Caco-2 (cell line): ENCODE measurements at regions of chr2 and their contacts with region 1.

Region 1: GRCh38 chr2:112884869-112885505 is 26.0 kb upstream of the IL37 start:
- DNase-seq: peak; percentile 60 to 72
- H3K4me3 ChIP-seq: no peak overlapping the region
- H3K4me3 Mint-ChIP-seq: no peak overlapping the region
- H3K27ac Mint-ChIP-seq: no peak overlapping the region
- H3K4me1 ChIP-seq: no peaks in the 10 kb centered on the region
- H3K4me1 Mint-ChIP-seq: no peaks in the 10 kb centered on the region
- H3K27me3 ChIP-seq: no peaks in the 10 kb centered on the region
- H3K27me3 Mint-ChIP-seq: no peaks in the 10 kb centered on the region
- CTCF ChIP-seq: peak; percentile 41 to 85

Region 2: DNA sequence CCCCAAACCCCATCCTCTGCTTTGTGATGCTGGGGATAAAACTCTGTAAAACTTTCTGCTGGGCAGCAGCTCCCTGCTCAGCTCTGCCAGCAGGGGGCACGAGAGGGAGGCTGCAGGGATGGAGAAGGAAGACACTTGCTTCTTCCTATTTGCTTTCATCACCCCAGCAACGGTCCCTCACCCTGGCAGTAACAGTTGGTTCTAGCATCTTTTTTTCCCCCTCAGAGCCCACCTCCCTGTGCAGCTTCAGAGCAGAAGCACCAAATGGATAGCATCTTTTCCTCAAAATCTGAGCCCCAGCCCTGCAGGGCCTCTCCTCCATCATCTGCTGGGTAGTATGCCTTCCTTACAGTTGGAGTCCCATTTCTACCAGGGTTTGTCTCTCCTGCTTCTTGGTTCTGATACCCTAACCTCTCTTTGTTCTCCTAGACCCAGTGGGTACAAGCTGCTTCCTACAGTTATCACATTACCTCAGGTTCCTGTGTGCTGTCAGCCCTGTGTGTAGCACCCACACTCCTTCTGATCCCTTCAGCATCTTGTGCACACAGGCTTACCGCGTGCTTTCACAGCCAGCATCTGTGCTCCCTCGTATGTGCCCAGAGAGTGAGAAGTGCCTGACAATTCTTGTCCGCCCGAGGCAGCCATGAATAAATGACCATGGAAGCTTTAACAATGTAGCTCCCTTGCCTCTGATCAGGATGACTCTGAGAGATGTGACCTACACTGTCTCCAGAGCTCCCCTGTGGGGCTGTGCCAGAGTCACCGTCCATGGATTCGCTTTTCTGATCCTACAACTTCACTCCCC is 135.0 kb before region 1 on chr2:
- CTCF ChIA-PET with region 1: interaction called, 20 read pairs
- POLR2A ChIA-PET with region 1: no interaction called
- intact Hi-C with region 1: loop called (anchors 1 kb)
- DNase-seq: peak; percentile 74 to 86
- H3K4me3 ChIP-seq: no peak overlapping the region
- H3K4me3 Mint-ChIP-seq: no peak overlapping the region
- H3K27ac Mint-ChIP-seq: peak overlapping the region; percentile 67
- H3K4me1 ChIP-seq: peaks cover 9% of the 10 kb centered on the region
- H3K4me1 Mint-ChIP-seq: peaks cover 7% of the 10 kb centered on the region
- H3K27me3 ChIP-seq: no peaks in the 10 kb centered on the region
- H3K27me3 Mint-ChIP-seq: no peaks in the 10 kb centered on the region
- CTCF ChIP-seq: peak; percentile 81 to 94

Region 3: DNA sequence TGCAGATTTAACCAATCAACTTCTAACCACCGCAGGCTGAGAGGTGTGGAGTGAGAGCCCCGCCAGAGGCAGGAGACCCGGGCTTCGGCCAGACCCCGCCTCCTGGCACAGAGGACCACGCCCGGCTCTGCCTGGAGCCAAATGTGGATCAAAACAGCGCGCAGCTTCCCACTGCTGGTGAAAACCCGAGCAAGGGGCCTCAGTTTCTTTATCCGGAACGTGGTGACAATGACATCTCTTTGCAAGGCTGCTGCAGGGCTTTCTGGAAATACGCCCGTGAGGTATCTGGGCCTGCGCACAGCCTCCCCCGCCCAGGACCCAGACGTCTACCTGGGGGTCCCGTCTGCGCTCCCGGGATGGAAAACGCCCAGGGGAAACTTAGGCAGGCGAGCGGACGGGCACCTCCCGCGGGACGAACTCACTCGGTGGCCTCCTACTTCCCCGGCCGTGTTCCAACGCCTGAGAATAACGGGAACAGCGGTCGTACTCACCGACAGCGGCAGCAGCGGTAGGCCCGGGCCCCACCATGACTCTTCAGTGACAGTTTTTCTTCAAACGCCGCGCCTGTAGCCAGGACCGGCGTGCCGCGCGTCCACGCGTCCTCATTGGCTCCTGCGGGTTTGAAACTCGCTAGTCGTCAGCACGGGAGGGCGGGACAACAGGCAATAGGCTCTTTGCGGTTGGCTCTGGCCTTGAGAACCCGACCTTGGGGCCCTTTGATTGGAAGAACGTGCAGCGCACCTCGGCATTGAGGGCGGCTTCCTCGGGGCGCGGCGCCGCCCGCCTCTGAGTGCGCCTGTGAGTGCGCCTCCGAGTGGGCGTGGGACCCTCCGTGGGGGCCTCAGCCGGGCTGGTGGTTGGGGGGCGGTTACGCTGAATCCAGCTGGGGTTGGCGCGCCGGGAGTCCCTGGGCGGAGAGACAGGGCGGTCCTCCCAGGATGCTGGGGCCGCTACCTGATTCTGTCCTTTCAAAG is 120.6 kb before region 1 on chr2 and contains the start of gene CKAP2L:
- CTCF ChIA-PET with region 1: no interaction called
- POLR2A ChIA-PET with region 1: no interaction called
- intact Hi-C with region 1: loop called (anchors 5 kb)
- DNase-seq: peak; percentile 97 to 98
- H3K4me3 ChIP-seq: peak within 1 kb of the TSS; percentile 76
- H3K4me3 Mint-ChIP-seq: peak within 1 kb of the TSS; percentile 100
- H3K27ac Mint-ChIP-seq: peak within 1 kb of the TSS; percentile 98
- H3K4me1 ChIP-seq: peaks cover 15% of the 10 kb centered on the region
- H3K4me1 Mint-ChIP-seq: peaks cover 28% of the 10 kb centered on the region
- H3K27me3 ChIP-seq: no peaks in the 10 kb centered on the region
- H3K27me3 Mint-ChIP-seq: no peaks in the 10 kb centered on the region
- CTCF ChIP-seq: no peak
- total RNA-seq, gene CKAP2L: 20.7 and 23.6 TPM in 2 replicates

Region 4: DNA sequence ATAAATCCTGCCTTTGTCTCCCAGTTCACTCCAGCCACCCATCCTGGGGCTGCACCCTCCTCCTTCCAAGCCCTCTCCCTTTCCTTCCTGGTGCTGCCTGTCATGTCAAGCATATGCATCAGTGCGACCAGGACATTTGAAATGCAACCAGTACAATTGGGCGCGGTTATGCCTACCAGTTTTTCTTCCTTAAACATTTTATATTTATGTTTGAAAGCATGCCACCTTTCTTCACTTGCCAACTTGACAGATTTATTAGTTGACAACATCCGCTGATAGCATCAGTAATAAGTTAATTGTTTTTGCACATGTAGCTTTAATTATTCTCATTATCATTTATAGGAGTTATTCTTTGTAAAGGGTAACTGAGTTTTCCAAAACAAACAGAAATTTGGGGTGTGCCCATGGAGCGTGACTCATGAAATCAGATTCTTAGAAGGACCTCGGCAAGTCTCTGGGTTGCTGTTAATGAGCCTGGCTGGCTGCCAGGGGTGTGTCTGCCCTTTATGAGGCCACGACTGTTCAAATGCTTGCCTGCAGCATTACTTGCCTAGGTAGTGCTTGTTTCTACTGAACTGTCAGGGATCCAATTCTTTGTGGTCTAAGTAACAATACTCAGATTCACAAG is 15.6 kb before region 1 on chr2:
- CTCF ChIA-PET with region 1: no interaction called
- POLR2A ChIA-PET with region 1: no interaction called
- intact Hi-C with region 1: no loop called
- DNase-seq: no peak
- H3K4me3 ChIP-seq: no peak overlapping the region
- H3K4me3 Mint-ChIP-seq: no peak overlapping the region
- H3K27ac Mint-ChIP-seq: no peak overlapping the region
- H3K4me1 ChIP-seq: no peaks in the 10 kb centered on the region
- H3K4me1 Mint-ChIP-seq: no peaks in the 10 kb centered on the region
- H3K27me3 ChIP-seq: no peaks in the 10 kb centered on the region
- H3K27me3 Mint-ChIP-seq: peaks cover 8% of the 10 kb centered on the region
- CTCF ChIP-seq: no peak

Region 5: GRCh38 chr2:112941753-112942658 is 57.0 kb after region 1 on chr2:
- CTCF ChIA-PET with region 1: interaction called, 11 read pairs
- POLR2A ChIA-PET with region 1: no interaction called
- intact Hi-C with region 1: no loop called
- DNase-seq: peak; percentile 79 to 84
- H3K4me3 ChIP-seq: no peak overlapping the region
- H3K4me3 Mint-ChIP-seq: no peak overlapping the region
- H3K27ac Mint-ChIP-seq: no peak overlapping the region
- H3K4me1 ChIP-seq: peaks cover 9% of the 10 kb centered on the region; the same call in 1 of the 2 replicates
- H3K4me1 Mint-ChIP-seq: peaks cover 5% of the 10 kb centered on the region
- H3K27me3 ChIP-seq: no peaks in the 10 kb centered on the region
- H3K27me3 Mint-ChIP-seq: no peaks in the 10 kb centered on the region
- CTCF ChIP-seq: peak; percentile 80 to 84

Region 6: GRCh38 chr2:113117541-113118262 is 232.7 kb after region 1 on chr2:
- CTCF ChIA-PET with region 1: interaction called, 10 read pairs
- POLR2A ChIA-PET with region 1: interaction called, 8 read pairs
- intact Hi-C with region 1: no loop called
- DNase-seq: no peak
- H3K4me3 ChIP-seq: no peak overlapping the region
- H3K4me3 Mint-ChIP-seq: no peak overlapping the region
- H3K27ac Mint-ChIP-seq: no peak overlapping the region
- H3K4me1 ChIP-seq: no peaks in the 10 kb centered on the region
- H3K4me1 Mint-ChIP-seq: no peaks in the 10 kb centered on the region
- H3K27me3 ChIP-seq: no peaks in the 10 kb centered on the region
- H3K27me3 Mint-ChIP-seq: peaks cover 3% of the 10 kb centered on the region
- CTCF ChIP-seq: no peak